Psoas muscle (tissue), 8 donors: ENCODE measurements at regions of chr1 and their contacts with region 1.

Region 1: GRCh38 chr1:11967028-11967547 is 13.2 kb upstream of the MFN2 start:
- DNase-seq: no peak
- ATAC-seq: peak; percentile 82 to 89 (median 86)
- H3K4me3 ChIP-seq: no peak overlapping the region
- H3K27ac ChIP-seq: no peak overlapping the region
- H3K4me1 ChIP-seq: no peaks in the 10 kb centered on the region
- H3K27me3 ChIP-seq: no peaks in the 10 kb centered on the region
- CTCF ChIP-seq: peak; percentile 62

Region 2: GRCh38 chr1:11772458-11772857 is 194.6 kb before region 1 on chr1:
- intact Hi-C with region 1: no loop called
- DNase-seq: no peak
- ATAC-seq: no peak
- H3K4me3 ChIP-seq: no peak overlapping the region
- H3K27ac ChIP-seq: no peak overlapping the region
- H3K4me1 ChIP-seq: no peaks in the 10 kb centered on the region
- H3K27me3 ChIP-seq: no peaks in the 10 kb centered on the region
- CTCF ChIP-seq: no peak

Region 3: DNA sequence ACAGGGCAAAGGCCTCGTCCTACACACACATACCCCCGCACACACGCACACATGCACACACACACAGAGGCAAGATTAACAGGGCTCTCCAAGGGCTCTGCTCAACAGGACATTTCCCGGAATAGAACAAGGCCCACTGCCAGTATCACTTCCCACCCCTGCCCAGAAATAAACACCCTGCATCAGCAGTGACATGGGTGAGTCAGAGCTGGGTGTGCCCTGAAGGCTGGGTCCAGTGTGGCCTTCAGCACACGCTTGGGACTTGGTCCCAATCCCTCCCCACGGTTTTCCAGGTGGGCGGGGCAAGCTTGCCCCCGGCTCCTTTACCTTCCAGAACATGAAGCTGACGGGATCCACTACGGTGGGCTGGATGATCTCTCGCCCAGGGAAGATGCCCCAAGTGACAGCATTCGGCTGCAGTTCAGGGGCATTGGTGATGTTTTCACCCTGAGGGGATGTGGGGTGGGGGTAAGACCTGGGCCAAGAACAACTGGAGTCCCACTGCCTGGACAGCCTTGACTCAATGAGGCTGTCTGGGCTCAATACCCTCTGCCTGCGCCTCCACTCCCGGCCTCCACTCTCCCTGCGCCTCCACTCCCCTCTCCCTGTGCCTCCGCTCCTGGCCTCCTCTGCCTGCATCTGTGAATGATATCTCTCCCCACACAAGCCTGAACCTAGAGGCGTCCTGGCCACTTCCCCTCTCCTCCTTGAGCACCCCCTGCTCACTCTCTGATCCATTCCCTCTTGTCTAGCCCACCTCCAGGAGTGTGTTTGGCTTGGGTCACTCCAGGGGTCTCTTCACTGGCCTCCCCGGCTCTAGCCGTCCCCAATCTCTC is 176.0 kb before region 1 on chr1:
- intact Hi-C with region 1: no loop called
- DNase-seq: peak; percentile 91 to 96
- ATAC-seq: peak; percentile 88 to 94 (median 90)
- H3K4me3 ChIP-seq: peak overlapping the region; percentile 41
- H3K27ac ChIP-seq: peak overlapping the region; percentile 98
- H3K4me1 ChIP-seq: peaks cover 70% of the 10 kb centered on the region
- H3K27me3 ChIP-seq: no peaks in the 10 kb centered on the region
- CTCF ChIP-seq: no peak

Region 4: DNA sequence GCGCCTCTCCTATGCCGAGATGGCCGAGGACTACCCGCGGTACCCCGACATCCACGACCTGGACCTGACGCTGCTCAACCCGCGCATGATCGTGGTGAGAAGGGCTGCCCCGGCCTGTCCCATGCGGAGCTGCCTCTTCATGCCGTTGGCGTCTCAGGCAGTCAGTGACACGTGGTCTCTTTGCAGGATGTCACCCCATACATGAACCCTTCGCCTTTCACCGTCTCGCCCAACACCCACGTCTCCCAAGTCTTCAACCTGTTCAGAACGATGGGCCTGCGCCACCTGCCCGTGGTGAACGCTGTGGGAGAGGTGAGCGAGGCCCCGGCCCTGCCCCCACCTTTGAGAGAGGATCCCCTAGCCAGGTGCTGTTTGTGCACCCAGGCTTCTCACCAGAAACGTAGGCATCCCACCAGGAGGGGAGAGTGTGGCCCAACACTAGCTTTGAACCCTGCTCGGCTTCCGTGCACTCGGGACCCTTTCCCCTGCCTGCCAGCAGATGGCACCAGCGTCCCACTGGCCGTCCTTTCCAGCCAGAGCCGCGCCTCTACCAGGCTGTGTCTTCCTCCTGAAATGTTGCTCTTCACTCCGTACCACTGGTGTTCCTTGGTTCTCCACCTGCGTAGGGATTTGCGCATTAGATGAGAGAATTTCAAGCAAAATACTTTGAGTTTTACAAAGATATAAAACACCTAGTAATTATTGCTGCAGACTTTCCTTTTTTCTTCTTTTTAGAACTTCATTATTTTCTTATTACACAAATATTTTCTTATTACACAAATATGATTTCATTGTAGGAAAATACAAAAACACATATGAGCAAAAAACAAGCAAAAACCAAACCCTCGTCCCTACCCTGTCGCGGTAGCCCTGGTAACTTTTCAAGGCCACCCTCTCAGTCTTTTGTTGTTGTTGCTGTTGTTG is 128.5 kb before region 1 on chr1:
- intact Hi-C with region 1: loop called (anchors 2 kb)
- DNase-seq: peak; percentile 68 to 90
- ATAC-seq: peak; percentile 89 to 95 (median 92)
- H3K4me3 ChIP-seq: no peak overlapping the region
- H3K27ac ChIP-seq: no peak overlapping the region
- H3K4me1 ChIP-seq: no peaks in the 10 kb centered on the region
- H3K27me3 ChIP-seq: no peaks in the 10 kb centered on the region
- CTCF ChIP-seq: peak; percentile 99

Region 5: DNA sequence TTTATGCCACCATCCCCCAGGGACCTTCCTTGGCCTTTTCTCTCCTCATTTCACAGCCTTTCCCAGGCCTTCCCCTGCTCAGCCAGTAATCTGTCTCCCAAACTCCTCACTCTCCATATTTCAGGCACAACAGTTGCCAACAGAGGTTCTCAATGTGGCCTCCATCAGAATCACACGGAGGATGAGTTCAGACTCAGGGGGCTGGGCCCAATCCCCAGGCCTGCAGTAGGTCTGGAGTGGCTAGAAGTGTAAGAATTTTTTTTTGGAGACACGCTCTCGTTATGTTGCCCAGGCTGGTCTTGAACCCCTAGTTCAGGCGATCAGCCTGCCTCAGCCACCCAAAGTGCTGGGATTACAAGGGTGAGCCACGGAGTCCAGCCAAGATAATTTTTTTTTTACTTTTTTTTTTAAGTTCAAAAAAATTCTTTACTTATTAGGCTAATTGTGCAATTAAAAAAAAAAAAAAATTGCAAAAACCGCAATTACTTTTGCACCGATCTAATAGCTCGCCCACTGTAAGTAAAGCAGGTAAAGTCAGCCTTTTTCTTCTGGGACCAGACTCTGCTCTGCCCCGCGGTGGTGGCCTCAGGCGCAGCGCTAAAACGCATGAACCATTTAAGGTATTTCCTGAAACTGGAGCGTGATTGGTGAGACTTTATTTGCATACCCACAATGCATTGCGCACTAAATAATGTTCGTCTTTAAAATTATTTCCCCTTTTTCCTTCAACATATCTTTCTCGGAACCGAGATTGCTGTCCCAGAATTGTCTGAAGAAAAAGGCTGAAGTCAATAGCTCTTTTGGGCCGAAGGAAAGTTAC is 59.6 kb before region 1 on chr1:
- intact Hi-C with region 1: loop called in 1 of 2 experiments (anchors 2 kb)
- DNase-seq: peak; percentile 89 to 96
- ATAC-seq: peak; percentile 82 to 90 (median 85)
- H3K4me3 ChIP-seq: peak overlapping the region; percentile 80
- H3K27ac ChIP-seq: peak overlapping the region; percentile 95
- H3K4me1 ChIP-seq: no peaks in the 10 kb centered on the region
- H3K27me3 ChIP-seq: no peaks in the 10 kb centered on the region
- CTCF ChIP-seq: peak; percentile 80

Region 6: GRCh38 chr1:11934302-11935056 is 32.6 kb before region 1 on chr1 and contains the start of gene PLOD1:
- intact Hi-C with region 1: loop called in 1 of 2 experiments (anchors 5 kb)
- DNase-seq: peak; percentile 87 to 92
- ATAC-seq: peak; percentile 74 to 82 (median 76)
- H3K4me3 ChIP-seq: peak within 1 kb of the TSS; percentile 81
- H3K27ac ChIP-seq: peak within 1 kb of the TSS; percentile 83
- H3K4me1 ChIP-seq: peaks cover 51% of the 10 kb centered on the region
- H3K27me3 ChIP-seq: no peaks in the 10 kb centered on the region
- CTCF ChIP-seq: no peak
- total RNA-seq, gene PLOD1: 25.1 to 52.3 (median 35.7) TPM

Region 7: DNA sequence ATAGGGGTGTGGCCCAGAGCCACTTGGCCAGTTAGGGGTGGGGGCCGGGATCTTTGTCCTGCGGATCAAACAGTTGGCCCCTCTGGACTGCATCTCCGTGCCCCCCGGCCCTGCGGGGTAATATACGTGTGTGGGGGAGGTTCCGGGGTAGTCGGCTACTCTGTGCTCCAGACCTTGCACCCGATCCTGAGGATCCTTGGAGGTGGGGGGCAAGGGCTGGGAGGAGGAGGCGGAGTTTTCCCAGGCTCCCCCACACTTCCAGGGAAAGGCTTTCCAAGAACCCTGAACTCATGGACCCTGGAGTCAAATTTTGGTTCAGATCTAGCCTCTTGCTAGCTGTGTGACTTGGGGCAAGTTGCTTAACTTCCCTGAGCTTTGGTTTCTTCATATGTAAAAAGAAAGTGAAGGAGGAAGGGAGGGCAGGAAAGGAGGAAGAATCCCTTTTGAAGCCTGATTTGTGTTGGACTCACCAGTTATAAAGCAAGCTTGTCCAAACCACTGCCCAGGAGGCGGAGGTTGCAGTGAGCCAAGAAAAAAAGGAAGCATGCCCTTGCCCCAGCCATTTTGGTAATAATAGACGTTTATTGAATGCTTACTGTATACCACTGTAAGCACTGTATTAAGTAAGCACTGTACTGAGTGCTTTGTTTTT is 52.9 kb after region 1 on chr1:
- intact Hi-C with region 1: no loop called
- DNase-seq: no peak
- ATAC-seq: peak in 2 of 4 donors; percentile 0 to 26
- H3K4me3 ChIP-seq: peak overlapping the region; percentile 77
- H3K27ac ChIP-seq: peak overlapping the region; percentile 83
- H3K4me1 ChIP-seq: peaks cover 5% of the 10 kb centered on the region
- H3K27me3 ChIP-seq: no peaks in the 10 kb centered on the region
- CTCF ChIP-seq: no peak